GM10248 (cell line): ENCODE measurements at regions of chr7 and their contacts with region 1.

Region 1: DNA sequence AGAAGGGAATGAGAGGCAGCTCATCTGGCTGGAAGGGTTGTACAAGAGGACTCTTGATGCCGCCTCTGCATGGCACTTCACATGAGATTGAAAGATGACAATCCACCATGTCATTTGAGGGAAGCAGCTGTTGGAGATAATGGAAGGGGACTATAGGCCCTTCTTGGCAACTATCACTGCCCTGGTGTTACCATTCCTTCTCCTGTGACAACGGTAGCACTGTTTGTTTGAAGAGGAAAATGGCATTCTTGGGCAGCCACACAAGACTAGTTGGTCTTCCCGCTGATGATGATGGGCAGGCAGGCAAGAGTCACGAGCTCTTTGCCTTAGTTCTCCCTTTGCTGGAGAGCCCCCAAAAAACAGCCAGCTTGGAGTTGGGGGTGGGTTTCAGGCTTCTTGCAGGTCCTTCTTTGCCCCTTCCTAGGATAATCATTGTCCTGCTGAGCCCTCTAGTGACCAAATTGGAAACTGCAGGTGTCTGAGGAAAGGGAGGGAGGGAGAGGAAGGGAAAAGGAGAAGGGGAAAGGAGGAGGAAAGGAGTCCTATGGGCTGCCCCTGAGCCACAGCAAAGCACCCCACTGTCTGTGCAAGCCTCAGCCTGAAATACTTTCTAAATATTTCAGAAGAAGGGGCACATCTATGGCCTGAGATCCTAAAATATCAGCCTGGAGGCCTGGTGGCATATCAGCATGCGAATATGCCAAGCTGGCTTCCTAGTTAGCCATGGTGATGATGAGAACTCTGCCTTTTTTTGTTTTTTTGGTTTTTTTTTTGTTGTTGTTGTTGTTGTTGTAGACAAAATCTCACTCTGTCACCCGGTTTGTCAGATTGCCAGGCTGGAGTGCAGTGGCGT is 165.6 kb upstream of the KMT2E start:
- DNase-seq: peak; percentile 55
- CTCF ChIP-seq: peak; percentile 97

Region 2: GRCh38 chr7:104231054-104232046 is 617.0 kb before region 1 on chr7:
- CTCF ChIA-PET with region 1: interaction called, 34 read pairs
- POLR2A ChIA-PET with region 1: no interaction called
- DNase-seq: peak; percentile 80
- CTCF ChIP-seq: peak; percentile 94

Region 3: DNA sequence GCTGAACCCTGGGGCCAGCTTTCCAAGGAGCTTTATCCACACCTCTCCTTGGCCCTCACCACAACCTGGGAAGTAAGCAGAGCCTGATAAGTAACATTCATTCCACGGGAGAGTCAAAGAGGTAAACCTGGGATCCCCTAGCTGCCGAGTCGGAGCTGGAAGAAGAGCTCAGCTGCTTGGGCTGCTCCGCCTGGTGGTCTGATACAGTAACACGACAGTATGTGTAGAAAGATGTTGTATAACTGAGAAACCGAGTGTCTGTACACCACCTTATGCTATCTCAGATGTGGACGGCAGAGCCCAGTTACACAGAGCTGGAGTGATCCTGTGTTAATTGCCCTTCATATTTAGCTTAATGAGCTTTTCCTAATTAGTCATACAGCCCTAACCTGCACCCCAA is 14.4 kb after region 1 on chr7:
- CTCF ChIA-PET with region 1: interaction called, 17 read pairs
- POLR2A ChIA-PET with region 1: no interaction called
- DNase-seq: no peak
- CTCF ChIP-seq: no peak